Activated CD4-positive, alpha-beta T cell treated with anti-CD3 and anti-CD28 coated beads for 36 hours (primary cell): ENCODE measurements at regions of chr15 and their contacts with region 1.

Region 1: GRCh38 chr15:89177633-89178306 is 43.6 kb downstream of the RLBP1 start:
- DNase-seq: peak; percentile 84
- ATAC-seq: peak; percentile 31
- H3K4me3 Mint-ChIP-seq: no peak overlapping the region
- H3K27ac Mint-ChIP-seq: peak overlapping the region; percentile 91
- H3K4me1 Mint-ChIP-seq: peaks cover 40% of the 10 kb centered on the region
- H3K27me3 Mint-ChIP-seq: no peaks in the 10 kb centered on the region

Region 2: DNA sequence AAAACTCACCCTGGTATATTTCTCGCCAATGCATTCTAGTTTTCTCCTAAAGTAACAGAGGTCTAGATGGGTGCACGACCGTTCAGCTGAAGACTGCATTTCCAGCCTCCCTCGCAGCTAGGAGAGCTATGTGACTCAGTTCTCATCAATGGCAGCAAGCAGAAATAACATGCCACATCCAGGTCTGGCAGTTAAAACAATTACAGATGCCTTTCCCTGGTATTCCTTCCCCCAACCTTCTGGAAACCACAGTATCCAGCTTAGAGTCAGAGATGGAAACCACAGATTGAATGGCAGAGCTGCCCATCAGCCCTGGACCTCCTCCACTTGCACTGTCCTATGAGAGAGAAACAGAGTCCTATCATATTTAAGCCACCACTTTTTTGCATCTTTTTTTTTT is 287.3 kb before region 1 on chr15:
- CTCF ChIA-PET with region 1: interaction called, 10 read pairs
- POLR2A ChIA-PET with region 1: no interaction called
- intact Hi-C with region 1: loop called (anchors 1 to 5 kb)
- DNase-seq: no peak
- ATAC-seq: no peak
- H3K4me3 Mint-ChIP-seq: no peak overlapping the region
- H3K27ac Mint-ChIP-seq: no peak overlapping the region
- H3K4me1 Mint-ChIP-seq: peaks cover 14% of the 10 kb centered on the region
- H3K27me3 Mint-ChIP-seq: no peaks in the 10 kb centered on the region

Region 3: GRCh38 chr15:88904624-88905327 is 273.0 kb before region 1 on chr15:
- CTCF ChIA-PET with region 1: interaction called, 12 read pairs
- POLR2A ChIA-PET with region 1: no interaction called
- intact Hi-C with region 1: loop called (anchors 1 to 5 kb)
- DNase-seq: peak; percentile 95
- ATAC-seq: peak; percentile 99
- H3K4me3 Mint-ChIP-seq: no peak overlapping the region
- H3K27ac Mint-ChIP-seq: peak overlapping the region; percentile 78
- H3K4me1 Mint-ChIP-seq: peaks cover 34% of the 10 kb centered on the region
- H3K27me3 Mint-ChIP-seq: no peaks in the 10 kb centered on the region

Region 4: GRCh38 chr15:89057504-89058133 is 120.2 kb before region 1 on chr15:
- CTCF ChIA-PET with region 1: interaction called, 90 read pairs
- POLR2A ChIA-PET with region 1: no interaction called
- intact Hi-C with region 1: loop called (anchors 1 kb)
- DNase-seq: peak; percentile 90
- ATAC-seq: peak; percentile 96
- H3K4me3 Mint-ChIP-seq: no peak overlapping the region
- H3K27ac Mint-ChIP-seq: no peak overlapping the region
- H3K4me1 Mint-ChIP-seq: peaks cover 7% of the 10 kb centered on the region
- H3K27me3 Mint-ChIP-seq: no peaks in the 10 kb centered on the region

Region 5: GRCh38 chr15:89087830-89088604 is 89.8 kb before region 1 on chr15 and contains the start of gene ABHD2:
- CTCF ChIA-PET with region 1: interaction called, 38 read pairs
- POLR2A ChIA-PET with region 1: interaction called, 3 read pairs
- intact Hi-C with region 1: loop called in 1 of 2 experiments (anchors 2 kb)
- DNase-seq: peak; percentile 99
- ATAC-seq: peak; percentile 98
- H3K4me3 Mint-ChIP-seq: no peak within 1 kb of the TSS
- H3K27ac Mint-ChIP-seq: peak within 1 kb of the TSS; percentile 9
- H3K4me1 Mint-ChIP-seq: peaks cover 36% of the 10 kb centered on the region
- H3K27me3 Mint-ChIP-seq: no peaks in the 10 kb centered on the region
- total RNA-seq, gene ABHD2: 41.5 to 52.1 TPM

Region 6: DNA sequence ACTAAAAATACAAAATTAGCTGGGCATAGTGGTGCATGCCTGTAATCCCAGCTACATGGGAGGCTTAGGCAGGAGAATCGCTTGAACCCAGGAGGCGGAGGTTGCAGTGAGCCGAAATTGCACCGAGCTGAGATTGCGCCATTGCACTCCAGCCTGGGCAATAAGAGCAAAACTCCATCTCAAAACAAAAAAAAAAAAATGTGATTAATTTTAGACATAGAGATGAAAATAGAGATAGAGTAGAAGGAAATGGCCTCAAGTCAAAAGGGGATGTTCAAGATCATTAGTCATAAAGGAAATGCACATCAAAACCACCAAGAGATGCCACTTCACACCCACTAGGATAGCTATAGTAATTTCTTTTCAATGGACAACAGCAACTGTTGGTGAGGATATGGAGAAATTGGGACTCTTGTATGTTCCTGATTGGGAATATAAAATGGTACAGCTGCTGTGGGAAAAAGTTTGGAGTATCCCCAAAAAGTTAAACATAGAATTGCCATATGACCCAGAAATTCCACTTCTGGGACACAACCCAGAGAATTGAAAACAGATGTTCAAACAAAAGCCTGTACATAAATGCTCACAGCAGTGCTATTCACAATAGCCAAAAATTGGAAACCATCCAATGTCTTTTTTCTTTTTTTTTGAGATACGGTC is 34.1 kb before region 1 on chr15:
- CTCF ChIA-PET with region 1: interaction called, 11 read pairs
- POLR2A ChIA-PET with region 1: interaction called, 3 read pairs
- intact Hi-C with region 1: loop called in 1 of 2 experiments (anchors 1 kb)
- DNase-seq: peak; percentile 20
- ATAC-seq: peak; percentile 95
- H3K4me3 Mint-ChIP-seq: no peak overlapping the region
- H3K27ac Mint-ChIP-seq: no peak overlapping the region
- H3K4me1 Mint-ChIP-seq: peaks cover 22% of the 10 kb centered on the region
- H3K27me3 Mint-ChIP-seq: no peaks in the 10 kb centered on the region

Region 7: GRCh38 chr15:89206908-89207331 is 29.1 kb after region 1 on chr15:
- CTCF ChIA-PET with region 1: interaction called, 30 read pairs
- POLR2A ChIA-PET with region 1: no interaction called
- intact Hi-C with region 1: loop called in 1 of 2 experiments (anchors 2 kb)
- DNase-seq: peak; percentile 86
- ATAC-seq: peak; percentile 80
- H3K4me3 Mint-ChIP-seq: no peak overlapping the region
- H3K27ac Mint-ChIP-seq: peak overlapping the region; percentile 39
- H3K4me1 Mint-ChIP-seq: peaks cover 36% of the 10 kb centered on the region
- H3K27me3 Mint-ChIP-seq: peaks cover 6% of the 10 kb centered on the region